ENCODE measurements at regions of chr3 and their contacts with region 1.

Region 1: DNA sequence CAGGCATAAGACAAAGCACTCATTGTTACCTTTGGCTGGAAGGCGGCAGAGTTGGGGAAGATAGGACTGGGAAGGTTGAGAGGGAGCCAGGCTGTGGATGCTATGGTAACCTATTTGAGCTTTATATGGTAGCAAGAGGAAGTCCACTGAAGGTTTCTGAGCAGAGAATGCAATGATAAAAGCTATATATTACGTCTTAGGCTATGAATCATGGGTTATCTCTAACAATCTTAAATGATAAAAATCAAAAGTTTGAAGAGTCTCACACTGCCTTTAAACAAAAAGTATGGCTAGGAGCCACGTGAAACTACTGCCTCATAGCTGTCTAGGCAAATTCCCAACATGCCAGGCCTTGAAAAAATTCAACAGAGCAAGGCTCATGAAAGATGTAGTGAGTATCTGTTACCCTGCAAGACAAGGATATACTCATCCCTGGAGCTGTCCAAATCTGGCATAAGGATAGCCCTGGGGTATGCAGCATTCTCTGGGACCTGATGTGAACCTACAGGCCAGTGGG is 4.1 kb downstream of the P3H2 start:
- DNase-seq: no peak
- H3K27ac ChIP-seq: no peak overlapping the region
- CTCF ChIP-seq: no peak

Region 2: DNA sequence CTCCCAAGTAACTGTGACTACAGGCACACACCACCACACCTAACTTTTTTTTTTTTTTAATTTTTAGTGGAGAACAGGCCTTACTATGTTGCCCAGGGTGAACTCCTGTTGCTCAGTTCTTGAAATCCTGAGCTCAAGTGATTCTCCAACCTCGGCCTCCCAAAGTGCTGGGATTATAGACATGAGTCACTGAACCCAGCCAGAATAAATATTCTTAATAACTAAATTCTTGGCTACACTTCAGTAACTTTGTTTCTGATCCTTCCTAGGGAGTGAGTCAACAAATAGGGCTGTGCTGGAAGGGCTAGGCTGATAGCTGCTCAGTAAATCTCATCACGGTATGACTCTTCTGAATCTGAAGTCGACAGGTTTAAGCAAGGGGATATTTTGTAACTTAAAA is 52.5 kb before region 1 on chr3:
- CTCF ChIA-PET with region 1: interaction called, 3 read pairs
- POLR2A ChIA-PET with region 1: interaction called, 10 read pairs
- DNase-seq: peak; percentile 74
- H3K27ac ChIP-seq: no peak overlapping the region
- CTCF ChIP-seq: no peak

Region 3: GRCh38 chr3:190239325-190239724 is 122.7 kb after region 1 on chr3:
- CTCF ChIA-PET with region 1: no interaction called
- POLR2A ChIA-PET with region 1: no interaction called
- DNase-seq: no peak
- H3K27ac ChIP-seq: no peak overlapping the region
- CTCF ChIP-seq: no peak

Region 4: DNA sequence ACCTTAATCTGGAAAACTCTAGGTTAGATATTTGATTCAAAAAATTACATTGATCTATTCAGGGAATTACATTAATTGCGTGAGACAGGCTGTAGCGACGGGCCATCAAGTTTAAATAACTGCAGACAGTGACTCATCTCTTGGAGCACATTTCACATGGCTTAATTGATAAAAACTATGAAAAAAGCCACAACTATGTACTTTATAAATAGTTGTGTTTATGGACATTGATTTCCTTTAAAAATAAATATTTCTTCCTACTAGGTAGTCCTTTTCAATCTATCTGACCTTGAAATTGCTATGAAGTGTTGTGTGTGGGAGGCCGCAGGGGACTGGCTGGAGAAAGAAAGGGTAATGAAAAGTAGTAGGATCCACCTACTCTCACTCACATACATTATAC is 555.0 kb after region 1 on chr3:
- CTCF ChIA-PET with region 1: no interaction called
- POLR2A ChIA-PET with region 1: no interaction called
- DNase-seq: peak; percentile 14
- H3K27ac ChIP-seq: no peak overlapping the region
- CTCF ChIP-seq: no peak

Measured in RWPE1 (cell line).